ENCODE measurements at regions of chr7 and their contacts with region 1.

Region 1: DNA sequence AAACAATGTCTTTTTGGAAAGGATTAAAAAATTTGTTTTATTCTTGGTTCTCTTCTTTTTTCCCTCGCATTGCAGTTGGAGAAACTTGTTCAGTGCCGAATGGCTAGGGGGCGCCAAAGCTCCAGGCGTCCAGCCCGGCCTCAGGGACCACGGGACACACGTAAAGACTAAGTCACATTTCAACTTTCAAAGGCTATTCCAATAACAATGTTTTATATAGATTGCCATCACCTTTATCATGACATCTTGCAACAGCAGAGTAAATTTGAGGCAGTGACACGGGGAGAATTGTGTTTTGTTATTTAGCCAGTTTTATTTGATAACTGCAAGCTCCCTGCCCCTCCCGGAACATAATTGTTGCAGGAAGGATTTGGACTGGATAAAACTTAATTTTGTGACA is 2.2 kb upstream of the IGFBP3 start:
- DNase-seq: no peak
- ATAC-seq: peak; percentile 75
- H3K4me3 ChIP-seq: no peak overlapping the region
- H3K27ac ChIP-seq: no peak overlapping the region
- H3K4me1 ChIP-seq: no peaks in the 10 kb centered on the region
- H3K27me3 ChIP-seq: peaks cover 1 to 3% of the 10 kb centered on the region in 2 experiments; a peak in 3 of 4 replicates
- CTCF ChIP-seq: peak; percentile 79 to 90 (median 87)
- EP300 ChIP-seq: no peak
- POLR2A ChIP-seq: no peak
- RAD21 ChIP-seq: peak; percentile 94

Region 2: GRCh38 chr7:45881759-45882464 is 41.4 kb before region 1 on chr7:
- CTCF ChIA-PET with region 1: no interaction called
- POLR2A ChIA-PET with region 1: no interaction called
- RAD21 ChIA-PET with region 1: no interaction called
- SMC1A ChIA-PET with region 1: no interaction called
- in situ Hi-C with region 1: no loop called
- intact Hi-C with region 1: no loop called
- DNase-seq: no peak
- ATAC-seq: no peak
- H3K4me3 ChIP-seq: no peak overlapping the region
- H3K27ac ChIP-seq: no peak overlapping the region
- H3K4me1 ChIP-seq: no peaks in the 10 kb centered on the region
- H3K27me3 ChIP-seq: peaks cover 0 to 3% of the 10 kb centered on the region in 2 experiments; a peak in 1 of 4 replicates
- CTCF ChIP-seq: no peak
- EP300 ChIP-seq: no peak
- POLR2A ChIP-seq: no peak
- RAD21 ChIP-seq: no peak

Region 3: DNA sequence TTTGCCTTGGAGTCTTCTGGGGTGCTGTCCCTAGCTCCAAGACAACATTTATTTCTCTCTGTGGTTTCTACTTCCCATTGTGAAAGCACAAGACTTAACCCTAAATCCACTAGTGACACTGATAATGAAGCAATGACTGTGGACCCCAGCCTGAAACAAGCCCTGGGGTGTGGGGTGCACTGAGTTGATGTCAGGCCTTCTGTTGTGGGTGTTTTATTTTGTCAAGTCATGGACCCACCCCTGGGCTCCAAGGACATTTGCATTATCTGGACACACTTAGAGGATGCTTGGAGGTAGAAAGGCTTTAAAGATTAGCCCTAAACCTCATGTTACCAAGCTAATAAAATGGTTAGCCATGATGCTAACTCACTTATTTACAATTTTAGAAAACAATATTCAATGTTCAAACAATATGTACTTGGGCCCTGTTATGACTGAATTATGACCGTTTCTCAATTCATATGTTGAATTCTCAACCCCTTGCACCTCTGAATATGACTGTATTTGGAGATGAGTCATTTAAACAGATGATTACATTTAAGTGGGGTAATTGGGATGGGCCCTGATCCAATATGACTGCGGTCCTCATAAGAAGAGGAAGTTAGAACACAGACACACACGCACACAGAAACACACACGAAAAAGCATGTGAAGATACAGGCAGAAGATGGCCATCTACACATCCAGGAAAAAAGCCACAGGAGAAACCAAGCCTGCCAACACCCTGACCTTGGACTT is 135.0 kb after region 1 on chr7:
- CTCF ChIA-PET with region 1: interaction called, 5 read pairs
- POLR2A ChIA-PET with region 1: no interaction called
- RAD21 ChIA-PET with region 1: interaction called, 7 read pairs
- SMC1A ChIA-PET with region 1: interaction called, 7 read pairs
- in situ Hi-C with region 1: no loop called
- intact Hi-C with region 1: loop called (anchors 5 kb)
- DNase-seq: no peak
- ATAC-seq: peak; percentile 85
- H3K4me3 ChIP-seq: no peak overlapping the region
- H3K27ac ChIP-seq: no peak overlapping the region
- H3K4me1 ChIP-seq: no peaks in the 10 kb centered on the region
- H3K27me3 ChIP-seq: no peaks in the 10 kb centered on the region
- CTCF ChIP-seq: no peak
- EP300 ChIP-seq: peak; percentile 77 to 82; a peak in 3 of 4 replicates
- POLR2A ChIP-seq: no peak
- RAD21 ChIP-seq: no peak

Region 4: GRCh38 chr7:46153951-46154787 is 230.9 kb after region 1 on chr7:
- CTCF ChIA-PET with region 1: interaction called, 32 read pairs
- POLR2A ChIA-PET with region 1: interaction called, 3 read pairs
- RAD21 ChIA-PET with region 1: interaction called, 12 read pairs
- SMC1A ChIA-PET with region 1: interaction called, 7 read pairs
- in situ Hi-C with region 1: no loop called
- intact Hi-C with region 1: loop called (anchors 1 kb)
- DNase-seq: peak; percentile 55
- ATAC-seq: peak; percentile 91
- H3K4me3 ChIP-seq: no peak overlapping the region
- H3K27ac ChIP-seq: peak overlapping the region; percentile 4
- H3K4me1 ChIP-seq: peaks cover 8% of the 10 kb centered on the region
- H3K27me3 ChIP-seq: no peaks in the 10 kb centered on the region
- CTCF ChIP-seq: peak in 1 of 3 experiments; percentile 12; a peak in 1 of 6 replicates
- EP300 ChIP-seq: peak in 1 of 2 experiments; percentile 19; a peak in 1 of 4 replicates
- POLR2A ChIP-seq: no peak
- RAD21 ChIP-seq: 0 out of 2 replicates have a peak, but pooled peaks have one; percentile 16

Region 5: GRCh38 chr7:46291064-46291463 is 367.8 kb after region 1 on chr7:
- CTCF ChIA-PET with region 1: interaction called, 16 read pairs
- POLR2A ChIA-PET with region 1: no interaction called
- RAD21 ChIA-PET with region 1: interaction called, 35 read pairs
- SMC1A ChIA-PET with region 1: interaction called, 14 read pairs
- in situ Hi-C with region 1: no loop called
- intact Hi-C with region 1: no loop called
- DNase-seq: peak; percentile 47
- ATAC-seq: peak; percentile 94
- H3K4me3 ChIP-seq: no peak overlapping the region
- H3K27ac ChIP-seq: peak overlapping the region; percentile 19; the same call in 1 of the 2 replicates
- H3K4me1 ChIP-seq: no peaks in the 10 kb centered on the region
- H3K27me3 ChIP-seq: no peaks in the 10 kb centered on the region
- CTCF ChIP-seq: no peak
- EP300 ChIP-seq: no peak
- POLR2A ChIP-seq: no peak
- RAD21 ChIP-seq: no peak

Region 6: DNA sequence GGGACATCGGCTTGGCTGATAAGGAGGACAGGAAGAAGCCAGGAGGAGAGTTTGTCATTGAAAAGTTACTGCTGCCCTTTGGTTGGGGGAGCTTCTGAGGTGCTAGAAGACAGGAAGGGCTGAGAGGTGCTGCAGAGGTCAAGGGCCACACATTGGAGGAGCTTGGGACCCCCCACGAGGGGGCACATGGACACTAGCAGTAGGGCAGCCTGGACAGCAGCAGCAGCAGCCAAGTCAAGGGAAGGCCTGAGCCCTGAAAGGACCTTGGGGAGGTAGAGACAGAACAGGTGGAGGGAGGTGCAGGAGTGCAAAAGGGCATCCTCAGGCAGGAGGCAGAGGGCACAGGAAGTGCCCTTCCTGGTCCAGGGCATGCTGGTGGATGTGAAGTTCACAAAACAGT is 437.5 kb after region 1 on chr7:
- CTCF ChIA-PET with region 1: interaction called, 57 read pairs
- POLR2A ChIA-PET with region 1: no interaction called
- RAD21 ChIA-PET with region 1: interaction called, 46 read pairs
- SMC1A ChIA-PET with region 1: interaction called, 55 read pairs
- in situ Hi-C with region 1: no loop called
- intact Hi-C with region 1: no loop called
- DNase-seq: no peak
- ATAC-seq: no peak; the same call in 2 of the 3 replicates
- H3K4me3 ChIP-seq: no peak overlapping the region
- H3K27ac ChIP-seq: no peak overlapping the region
- H3K4me1 ChIP-seq: no peaks in the 10 kb centered on the region
- H3K27me3 ChIP-seq: no peaks in the 10 kb centered on the region
- CTCF ChIP-seq: peak in 1 of 3 experiments; percentile 14; a peak in 1 of 6 replicates
- EP300 ChIP-seq: no peak
- POLR2A ChIP-seq: no peak
- RAD21 ChIP-seq: peak; percentile 24; the same call in 1 of the 2 replicates

Region 7: GRCh38 chr7:47093320-47094234 is 1170.3 kb after region 1 on chr7:
- CTCF ChIA-PET with region 1: interaction called, 91 read pairs
- POLR2A ChIA-PET with region 1: no interaction called
- RAD21 ChIA-PET with region 1: interaction called, 41 read pairs
- SMC1A ChIA-PET with region 1: interaction called, 30 read pairs
- in situ Hi-C with region 1: loop called (anchors 5 kb)
- intact Hi-C with region 1: no loop called
- DNase-seq: no peak
- ATAC-seq: no peak
- H3K4me3 ChIP-seq: no peak overlapping the region
- H3K27ac ChIP-seq: no peak overlapping the region
- H3K4me1 ChIP-seq: no peaks in the 10 kb centered on the region
- H3K27me3 ChIP-seq: no peaks in the 10 kb centered on the region
- CTCF ChIP-seq: no peak
- EP300 ChIP-seq: no peak
- POLR2A ChIP-seq: no peak
- RAD21 ChIP-seq: no peak